Uterus (tissue), 4 donors: ENCODE measurements at regions of chr14 and their contacts with region 1.

Region 1: DNA sequence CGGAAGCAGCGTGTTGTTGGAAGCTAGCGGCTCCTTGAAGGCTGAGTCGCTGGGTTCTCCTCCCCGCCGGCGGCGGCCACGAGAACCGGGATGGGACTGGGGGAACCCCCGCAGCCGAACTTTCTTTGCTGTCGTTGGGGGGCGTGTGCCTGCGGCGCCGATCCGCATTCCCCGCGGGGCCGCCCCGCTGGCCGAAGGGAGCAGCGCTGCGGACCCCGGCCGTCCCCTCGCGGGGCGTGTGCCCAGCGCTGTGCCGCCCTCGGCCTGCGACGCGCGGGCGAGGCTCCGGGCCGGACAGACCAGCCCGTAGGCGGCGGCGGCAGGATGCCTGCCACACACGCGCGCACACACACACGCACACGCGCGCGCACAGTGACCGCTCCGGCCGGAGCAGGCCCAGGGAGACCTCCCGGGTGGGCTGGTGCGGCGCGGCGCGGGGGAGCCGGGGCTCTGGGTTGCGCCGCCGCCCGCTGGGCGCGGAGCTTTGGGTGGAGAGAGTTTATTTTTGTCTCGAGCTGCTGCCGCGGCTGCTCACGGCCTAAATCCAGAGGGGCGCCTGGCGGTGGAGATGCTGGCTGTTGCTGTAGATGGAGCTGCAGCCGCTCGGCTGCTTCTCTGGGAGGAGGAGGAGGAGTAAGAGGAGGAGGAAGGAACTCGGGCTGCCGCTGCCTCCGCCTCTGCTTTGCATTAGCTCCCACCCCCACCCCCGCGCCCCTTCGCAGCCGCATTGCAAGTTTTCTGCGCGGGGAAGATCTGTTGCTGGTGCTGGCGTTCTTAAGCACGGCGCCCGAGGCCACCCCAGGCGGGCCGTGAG is at the start of gene SAMD4A:
- DNase-seq: peak; percentile 78 to 84
- H3K4me3 ChIP-seq: peak within 1 kb of the TSS; percentile 71 to 93
- H3K27ac ChIP-seq: peak within 1 kb of the TSS; percentile 100
- H3K4me1 ChIP-seq: no peaks in the 10 kb centered on the region
- H3K27me3 ChIP-seq: no peaks in the 10 kb centered on the region
- CTCF ChIP-seq: peak in 3 of 4 experiments; percentile 26 to 46 (median 40)
- POLR2A ChIP-seq: peak; percentile 40 to 65
- total RNA-seq, gene SAMD4A: 46.9 to 67.8 (median 55.0) TPM

Region 2: GRCh38 chr14:54686219-54686870 is 119.7 kb after region 1 on chr14:
- intact Hi-C with region 1: loop called (anchors 5 kb)
- DNase-seq: peak; percentile 77 to 80
- H3K4me3 ChIP-seq: no peak overlapping the region
- H3K27ac ChIP-seq: peak overlapping the region; percentile 92 to 97
- H3K4me1 ChIP-seq: peaks cover 6 to 18% of the 10 kb centered on the region in 2 donors
- H3K27me3 ChIP-seq: no peaks in the 10 kb centered on the region
- CTCF ChIP-seq: peak in 1 of 4 experiments; percentile 27
- POLR2A ChIP-seq: peak in 1 of 2 donors; percentile 28

Region 3: GRCh38 chr14:54773171-54773975 is 206.8 kb after region 1 on chr14:
- intact Hi-C with region 1: loop called (anchors 5 kb)
- DNase-seq: peak; percentile 90 to 93
- H3K4me3 ChIP-seq: no peak overlapping the region
- H3K27ac ChIP-seq: peak overlapping the region; percentile 95 to 97
- H3K4me1 ChIP-seq: peaks cover 5 to 6% of the 10 kb centered on the region in 2 donors
- H3K27me3 ChIP-seq: no peaks in the 10 kb centered on the region
- CTCF ChIP-seq: peak; percentile 67 to 92 (median 76)
- POLR2A ChIP-seq: peak in 1 of 2 donors; percentile 30